ENCODE measurements at regions of chr7 and their contacts with region 1.

Region 1: DNA sequence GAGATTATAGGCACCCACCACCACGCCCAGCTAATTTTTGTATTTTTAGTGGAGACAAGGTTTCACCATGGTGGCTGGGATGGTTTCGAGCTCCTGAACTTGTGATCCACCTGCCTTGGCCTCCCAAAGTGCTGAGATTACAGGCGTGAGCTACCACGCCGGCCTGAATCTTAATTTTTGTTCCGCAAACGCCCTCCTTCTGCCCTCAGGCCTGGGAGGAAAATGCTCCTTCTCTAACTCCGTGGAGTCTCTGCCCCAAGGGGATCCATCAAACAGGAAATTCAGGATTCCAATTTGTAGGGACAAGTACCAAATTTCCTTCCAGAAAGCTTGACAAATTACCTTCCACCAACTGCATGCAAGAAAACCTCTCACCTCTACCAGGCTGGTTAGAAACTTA is 43.2 kb downstream of the RBAK start:
- DNase-seq: no peak
- H3K4me3 ChIP-seq: no peak overlapping the region
- H3K27ac ChIP-seq: no peak overlapping the region
- H3K4me1 ChIP-seq: peaks cover 0 to 6% (median 6%) of the 10 kb centered on the region in 4 donors
- H3K27me3 ChIP-seq: peaks cover 0 to 36% (median 0%) of the 10 kb centered on the region in 4 donors
- CTCF ChIP-seq: no peak
- EP300 ChIP-seq: no peak
- POLR2A ChIP-seq: no peak

Region 2: DNA sequence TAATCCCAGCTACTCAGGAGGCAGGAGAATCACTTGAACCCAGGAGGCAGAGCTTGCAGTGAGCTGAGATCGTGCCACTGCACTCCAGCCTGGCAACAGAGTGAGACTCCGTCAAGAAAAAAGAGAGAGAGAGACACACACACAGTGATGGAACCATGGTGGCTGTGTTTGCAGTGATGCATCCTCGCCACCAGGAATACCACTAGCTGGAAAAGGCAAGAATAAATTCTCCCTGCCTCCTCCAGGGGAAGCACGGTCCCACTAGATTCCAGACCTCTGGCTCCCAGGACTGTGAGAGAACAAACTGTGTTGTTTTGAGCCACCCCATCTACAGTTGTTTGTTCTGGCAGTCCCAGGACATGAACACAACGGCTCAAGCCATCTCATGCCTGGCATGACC is 727.1 kb before region 1 on chr7:
- intact Hi-C with region 1: no loop called
- DNase-seq: no peak
- H3K4me3 ChIP-seq: no peak overlapping the region
- H3K27ac ChIP-seq: no peak overlapping the region
- H3K4me1 ChIP-seq: no peaks in the 10 kb centered on the region
- H3K27me3 ChIP-seq: peaks cover 0 to 11% (median 0%) of the 10 kb centered on the region in 4 donors
- CTCF ChIP-seq: no peak
- EP300 ChIP-seq: no peak
- POLR2A ChIP-seq: no peak

Region 3: DNA sequence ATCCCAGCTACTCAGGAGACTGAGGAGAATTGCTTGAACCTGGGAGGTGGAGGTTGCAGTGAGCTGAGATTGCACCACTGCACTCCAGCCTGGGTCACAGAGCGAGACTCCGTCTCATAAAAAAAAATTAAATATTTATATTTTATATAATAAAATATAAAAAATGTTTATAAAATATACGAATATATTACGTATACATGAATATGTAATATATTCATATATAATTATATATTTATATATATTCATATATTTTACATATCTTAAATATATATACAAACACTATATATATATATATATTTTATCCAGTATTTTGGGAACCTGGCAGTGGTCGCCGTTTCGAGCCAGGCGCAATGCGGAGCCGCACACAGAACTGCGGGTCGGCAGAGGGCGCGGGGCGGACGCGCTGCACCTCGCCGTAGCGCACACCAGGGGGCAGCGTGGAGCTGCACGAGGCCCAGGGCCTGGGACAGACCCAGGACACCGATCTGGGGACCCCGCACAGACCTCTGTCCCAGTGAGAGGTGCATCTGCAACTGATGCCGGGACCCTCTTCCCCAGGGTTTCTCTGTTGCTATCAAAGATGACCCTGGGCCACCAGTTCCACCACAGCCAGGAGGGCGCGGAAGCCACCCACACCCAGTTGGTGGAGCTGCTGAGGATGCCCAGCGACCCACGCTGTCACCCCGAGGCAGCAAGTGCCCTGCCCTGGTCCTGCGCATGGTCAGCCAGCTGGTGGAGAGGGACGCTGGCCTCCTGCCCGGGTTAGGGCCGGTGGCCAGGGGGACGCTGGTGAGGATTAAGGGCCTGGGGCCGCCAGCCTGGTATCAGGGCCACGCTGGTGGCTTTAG is 290.8 kb before region 1 on chr7:
- intact Hi-C with region 1: loop called (anchors 5 kb)
- DNase-seq: no peak
- H3K4me3 ChIP-seq: no peak overlapping the region
- H3K27ac ChIP-seq: no peak overlapping the region
- H3K4me1 ChIP-seq: peaks cover 10 to 24% (median 17%) of the 10 kb centered on the region in 4 donors
- H3K27me3 ChIP-seq: peaks cover 0 to 11% (median 0%) of the 10 kb centered on the region in 4 donors
- CTCF ChIP-seq: peak; percentile 75 to 91 (median 83)
- EP300 ChIP-seq: no peak
- POLR2A ChIP-seq: no peak

Region 4: DNA sequence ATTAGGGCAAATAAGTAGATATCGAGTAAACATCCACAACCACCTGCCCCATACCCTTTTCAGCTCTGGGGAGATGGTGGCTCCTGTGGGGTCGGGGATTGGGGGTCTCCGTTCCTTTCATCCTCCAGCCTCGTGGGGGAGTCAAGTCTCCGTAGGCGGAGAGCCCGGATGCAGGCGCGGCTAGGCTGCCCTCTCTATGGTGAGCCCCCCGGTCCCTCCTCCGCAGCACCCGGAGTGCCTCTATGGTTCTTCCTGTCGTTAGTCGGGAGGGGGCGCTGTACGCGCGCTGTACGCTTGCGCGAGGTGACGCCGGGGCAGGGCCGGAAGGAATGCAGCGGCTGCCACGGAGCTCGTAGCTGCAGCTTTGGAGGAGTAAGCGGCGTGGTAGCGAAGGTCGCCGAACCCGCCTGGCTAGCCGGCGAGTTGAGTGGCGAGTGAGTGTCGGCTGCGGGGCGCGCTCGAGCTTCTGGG is 115.1 kb before region 1 on chr7:
- intact Hi-C with region 1: loop called (anchors 5 kb)
- DNase-seq: peak; percentile 97
- H3K4me3 ChIP-seq: peak overlapping the region; percentile 73 to 91 (median 86)
- H3K27ac ChIP-seq: peak overlapping the region; percentile 86 to 94 (median 90)
- H3K4me1 ChIP-seq: peaks cover 3 to 33% (median 22%) of the 10 kb centered on the region in 4 donors
- H3K27me3 ChIP-seq: no peaks in the 10 kb centered on the region
- CTCF ChIP-seq: peak; percentile 76 to 83 (median 78)
- EP300 ChIP-seq: no peak
- POLR2A ChIP-seq: peak; percentile 53